PC-9 (cell line): ENCODE measurements at regions of chr13 and their contacts with region 1.

Region 1: DNA sequence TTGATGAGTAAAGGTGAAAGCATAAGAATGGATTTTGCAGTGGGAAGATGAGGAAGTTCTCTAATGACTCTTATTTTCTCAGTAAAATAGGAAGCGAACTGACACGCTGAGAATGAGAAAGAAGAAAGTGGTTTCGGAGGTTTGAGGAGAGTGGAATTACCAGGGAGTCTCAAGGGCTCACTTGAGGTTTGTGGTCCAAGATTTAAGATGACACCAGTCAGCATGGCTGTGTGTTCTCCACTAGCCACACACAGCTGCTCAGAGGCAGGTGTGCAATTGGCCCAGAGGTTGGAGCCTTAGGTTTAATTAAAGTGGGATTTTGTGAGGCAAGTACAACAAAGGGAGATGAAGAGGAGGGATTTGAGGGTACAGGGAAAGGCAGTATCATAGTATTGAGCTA is 99.6 kb upstream of the NBEA start:
- DNase-seq: no peak
- H3K4me3 ChIP-seq: no peak overlapping the region
- H3K27ac ChIP-seq: no peak overlapping the region
- H3K4me1 ChIP-seq: no peaks in the 10 kb centered on the region; the same call in 1 of the 2 replicates
- H3K27me3 ChIP-seq: no peaks in the 10 kb centered on the region
- CTCF ChIP-seq: no peak

Region 2: DNA sequence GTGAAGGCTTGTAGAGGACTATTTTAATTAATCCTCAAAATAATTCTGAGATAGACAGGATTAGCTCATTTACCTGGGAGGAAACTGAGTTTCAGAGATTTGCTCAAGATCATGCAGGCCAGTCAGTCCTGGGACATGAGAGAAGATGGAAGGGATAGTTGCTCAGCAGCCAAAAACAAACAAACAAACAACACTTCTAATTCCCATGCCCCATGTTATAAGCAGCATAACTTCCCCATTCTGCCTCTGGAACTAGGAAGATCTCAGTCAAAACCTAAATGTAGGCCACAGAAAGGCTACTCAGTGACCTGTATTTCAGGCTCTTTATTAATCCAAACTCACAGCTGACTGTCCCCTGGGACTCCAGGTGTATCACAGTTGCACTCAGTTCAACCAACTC is 389.6 kb before region 1 on chr13:
- CTCF ChIA-PET with region 1: no interaction called
- POLR2A ChIA-PET with region 1: no interaction called
- intact Hi-C with region 1: no loop called
- DNase-seq: peak in 1 of 2 experiments; percentile 64
- H3K4me3 ChIP-seq: no peak overlapping the region
- H3K27ac ChIP-seq: no peak overlapping the region
- H3K4me1 ChIP-seq: no peaks in the 10 kb centered on the region
- H3K27me3 ChIP-seq: no peaks in the 10 kb centered on the region
- CTCF ChIP-seq: no peak

Region 3: GRCh38 chr13:34777089-34777913 is 65.2 kb before region 1 on chr13:
- CTCF ChIA-PET with region 1: no interaction called
- POLR2A ChIA-PET with region 1: interaction called, 18 read pairs
- intact Hi-C with region 1: no loop called
- DNase-seq: no peak
- H3K4me3 ChIP-seq: no peak overlapping the region
- H3K27ac ChIP-seq: no peak overlapping the region
- H3K4me1 ChIP-seq: no peaks in the 10 kb centered on the region
- H3K27me3 ChIP-seq: no peaks in the 10 kb centered on the region
- CTCF ChIP-seq: no peak